Sciatic nerve (tissue), 2 donors: ENCODE measurements at regions of chr14 and their contacts with region 1.

Region 1: DNA sequence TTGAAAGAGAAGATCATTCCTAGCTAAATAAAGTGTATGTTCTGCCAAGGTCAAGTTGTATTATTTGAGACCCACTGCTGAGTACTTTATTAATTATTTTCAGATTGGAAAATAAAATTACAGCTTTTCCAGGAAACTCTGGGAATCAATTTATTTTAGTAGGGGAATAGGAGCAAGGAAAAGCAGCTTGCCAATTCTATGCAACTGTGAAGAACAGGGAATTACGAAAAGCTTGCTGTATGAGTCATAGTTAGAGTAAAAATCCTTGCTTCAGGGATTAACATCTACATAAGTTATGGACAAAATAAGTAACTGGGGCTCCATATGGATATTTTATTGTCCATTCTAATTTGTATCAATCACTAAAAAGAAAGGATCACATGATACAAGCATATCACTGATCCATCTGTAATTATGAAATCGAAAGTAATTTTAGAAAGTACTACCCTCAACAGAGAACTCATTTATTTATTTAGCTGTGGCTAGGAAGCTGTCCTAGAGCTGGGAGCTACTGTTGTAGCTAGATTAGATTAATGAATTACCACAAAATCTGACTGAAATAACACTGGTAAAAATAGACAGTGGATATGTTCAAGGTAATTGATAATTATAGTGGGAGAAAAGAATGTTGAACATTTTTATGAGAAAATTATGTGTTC is 303.5 kb upstream of the NPAS3 start:
- DNase-seq: no peak
- ATAC-seq: peak; percentile 88

Region 2: GRCh38 chr14:34470319-34470718 is 1835.1 kb after region 1 on chr14:
- intact Hi-C with region 1: loop called (anchors 5 kb)
- DNase-seq: no peak
- ATAC-seq: no peak